ENCODE measurements at regions of chr6 and their contacts with region 1.

Region 1: GRCh38 chr6:157756708-157757429 is 66.2 kb upstream of the SNX9 start:
- DNase-seq: peak; percentile 90
- ATAC-seq: peak; percentile 64
- H3K4me3 ChIP-seq: peak overlapping the region in 1 of 5 experiments; percentile 15
- H3K4me3 Mint-ChIP-seq: peak overlapping the region; percentile 61
- H3K27ac ChIP-seq: no peak overlapping the region
- H3K27ac Mint-ChIP-seq: peak overlapping the region; percentile 41
- H3K4me1 ChIP-seq: peaks cover 28 to 43% of the 10 kb centered on the region in 2 donors
- H3K4me1 Mint-ChIP-seq: peaks cover 58% of the 10 kb centered on the region
- H3K27me3 ChIP-seq: peaks cover 0 to 5% (median 1%) of the 10 kb centered on the region in 4 experiments
- H3K27me3 Mint-ChIP-seq: peaks cover 13% of the 10 kb centered on the region
- CTCF ChIP-seq: peak; percentile 88

Region 2: DNA sequence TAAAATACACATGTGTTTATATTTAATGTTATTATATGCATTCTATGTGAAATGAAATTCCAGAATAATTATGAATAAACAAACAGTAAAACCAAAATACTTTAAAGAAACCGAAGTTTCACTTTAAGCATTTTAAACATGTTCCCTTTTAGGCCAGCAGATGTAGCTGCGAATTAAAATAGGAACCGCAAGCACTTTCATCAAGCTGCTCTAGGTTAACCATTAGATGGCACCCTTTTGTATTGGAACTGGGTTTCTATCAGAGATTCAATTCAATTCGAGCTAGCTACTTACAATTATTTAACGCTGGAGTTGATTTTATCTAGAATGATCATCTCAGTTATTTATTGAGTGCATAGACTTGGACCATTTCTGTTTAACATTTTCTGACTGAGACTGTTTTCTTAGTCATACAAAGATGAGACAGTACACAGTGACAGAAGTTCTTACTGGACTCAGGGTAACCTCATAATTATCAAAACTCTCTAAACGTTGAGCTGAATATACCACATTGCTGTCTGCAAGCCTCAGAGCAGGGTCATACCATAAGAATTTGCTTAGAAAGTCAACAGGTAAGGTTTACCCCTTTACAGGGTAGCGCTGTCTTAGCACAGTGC is 442.1 kb before region 1 on chr6:
- CTCF ChIA-PET with region 1: interaction called, 22 read pairs
- POLR2A ChIA-PET with region 1: no interaction called
- intact Hi-C with region 1: loop called (anchors 1 kb)
- DNase-seq: peak; percentile 77
- ATAC-seq: peak; percentile 92
- H3K4me3 ChIP-seq: no peak overlapping the region
- H3K4me3 Mint-ChIP-seq: no peak overlapping the region
- H3K27ac ChIP-seq: no peak overlapping the region
- H3K27ac Mint-ChIP-seq: no peak overlapping the region
- H3K4me1 ChIP-seq: peaks cover 0 to 3% of the 10 kb centered on the region in 2 donors
- H3K4me1 Mint-ChIP-seq: peaks cover 3% of the 10 kb centered on the region
- H3K27me3 ChIP-seq: no peaks in the 10 kb centered on the region
- H3K27me3 Mint-ChIP-seq: no peaks in the 10 kb centered on the region
- CTCF ChIP-seq: peak; percentile 90

Region 3: DNA sequence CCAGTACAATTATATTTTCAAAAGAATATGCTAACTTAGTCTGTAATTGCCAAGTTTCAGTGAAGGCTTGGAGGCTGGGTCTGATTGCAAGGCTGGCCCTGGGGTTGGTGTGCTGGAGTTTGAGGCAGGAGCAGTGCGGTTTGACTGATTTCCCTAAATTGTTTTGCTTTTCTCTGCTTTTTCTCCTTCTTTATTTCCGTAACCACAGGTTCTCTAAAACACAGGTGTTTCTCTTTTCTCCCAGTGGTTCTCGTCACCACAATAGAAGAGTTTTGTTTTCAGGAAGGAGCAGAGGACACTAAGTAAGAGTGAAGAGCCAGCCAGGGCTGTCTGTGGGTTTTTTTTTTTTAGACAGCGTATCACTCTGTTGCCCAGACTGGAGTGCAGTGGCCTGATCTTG is 58.0 kb after region 1 on chr6:
- CTCF ChIA-PET with region 1: interaction called, 10 read pairs
- POLR2A ChIA-PET with region 1: no interaction called
- intact Hi-C with region 1: no loop called
- DNase-seq: peak; percentile 70
- ATAC-seq: peak; percentile 76
- H3K4me3 ChIP-seq: peak overlapping the region in 1 of 5 experiments; percentile 18
- H3K4me3 Mint-ChIP-seq: peak overlapping the region; percentile 44
- H3K27ac ChIP-seq: peak overlapping the region; percentile 44 to 66
- H3K27ac Mint-ChIP-seq: peak overlapping the region; percentile 86
- H3K4me1 ChIP-seq: peaks cover 23 to 31% of the 10 kb centered on the region in 2 donors
- H3K4me1 Mint-ChIP-seq: peaks cover 45% of the 10 kb centered on the region
- H3K27me3 ChIP-seq: no peaks in the 10 kb centered on the region
- H3K27me3 Mint-ChIP-seq: no peaks in the 10 kb centered on the region
- CTCF ChIP-seq: no peak

Region 4: GRCh38 chr6:157841211-157841840 is 84.5 kb after region 1 on chr6:
- CTCF ChIA-PET with region 1: interaction called, 17 read pairs
- POLR2A ChIA-PET with region 1: no interaction called
- intact Hi-C with region 1: no loop called
- DNase-seq: peak; percentile 63
- ATAC-seq: peak; percentile 95
- H3K4me3 ChIP-seq: no peak overlapping the region
- H3K4me3 Mint-ChIP-seq: peak overlapping the region; percentile 37
- H3K27ac ChIP-seq: no peak overlapping the region
- H3K27ac Mint-ChIP-seq: peak overlapping the region; percentile 26
- H3K4me1 ChIP-seq: peaks cover 46 to 51% of the 10 kb centered on the region in 2 donors
- H3K4me1 Mint-ChIP-seq: peaks cover 75% of the 10 kb centered on the region
- H3K27me3 ChIP-seq: no peaks in the 10 kb centered on the region
- H3K27me3 Mint-ChIP-seq: no peaks in the 10 kb centered on the region
- CTCF ChIP-seq: no peak

Region 5: DNA sequence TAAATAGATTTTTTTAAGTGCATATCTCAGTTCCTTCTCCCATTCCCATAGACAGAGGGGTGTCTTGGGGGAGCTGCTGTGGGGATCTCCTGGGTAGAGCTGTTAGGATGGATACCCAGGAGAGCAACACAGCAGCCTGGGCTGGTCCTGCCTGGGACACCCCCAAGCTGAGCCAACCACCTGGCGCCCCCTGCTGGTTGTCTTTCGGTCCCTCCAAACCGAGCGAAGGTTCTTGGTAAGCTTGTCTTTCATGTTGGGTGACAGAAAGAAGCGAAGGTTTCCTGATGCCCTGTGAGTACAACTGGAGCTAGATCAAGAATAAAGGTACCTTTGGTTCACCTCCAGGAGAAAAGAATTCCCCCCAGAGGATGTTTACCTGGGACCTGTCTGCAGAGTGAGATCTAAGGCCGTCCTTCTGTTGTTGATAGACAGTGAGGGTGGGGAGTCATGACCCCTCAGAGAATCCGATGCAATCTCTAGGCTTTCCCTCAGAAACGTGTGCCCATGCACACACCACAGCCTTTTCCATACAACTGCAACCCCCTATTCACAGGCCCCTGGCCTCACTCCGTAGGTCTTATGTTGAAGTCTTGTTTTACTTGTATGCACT is 117.0 kb after region 1 on chr6:
- CTCF ChIA-PET with region 1: interaction called, 340 read pairs
- POLR2A ChIA-PET with region 1: interaction called, 4 read pairs
- intact Hi-C with region 1: loop called (anchors 1 kb)
- DNase-seq: peak; percentile 85
- ATAC-seq: peak; percentile 86
- H3K4me3 ChIP-seq: no peak overlapping the region
- H3K4me3 Mint-ChIP-seq: no peak overlapping the region
- H3K27ac ChIP-seq: no peak overlapping the region
- H3K27ac Mint-ChIP-seq: no peak overlapping the region
- H3K4me1 ChIP-seq: peaks cover 12 to 16% of the 10 kb centered on the region in 2 donors
- H3K4me1 Mint-ChIP-seq: peaks cover 26% of the 10 kb centered on the region
- H3K27me3 ChIP-seq: no peaks in the 10 kb centered on the region
- H3K27me3 Mint-ChIP-seq: no peaks in the 10 kb centered on the region
- CTCF ChIP-seq: peak; percentile 96

Region 6: GRCh38 chr6:157946865-157947532 is 190.1 kb after region 1 on chr6:
- CTCF ChIA-PET with region 1: interaction called, 19 read pairs
- POLR2A ChIA-PET with region 1: no interaction called
- intact Hi-C with region 1: loop called (anchors 2 kb)
- DNase-seq: peak; percentile 45
- ATAC-seq: peak; percentile 24
- H3K4me3 ChIP-seq: no peak overlapping the region
- H3K4me3 Mint-ChIP-seq: no peak overlapping the region
- H3K27ac ChIP-seq: no peak overlapping the region
- H3K27ac Mint-ChIP-seq: peak overlapping the region; percentile 61
- H3K4me1 ChIP-seq: no peaks in the 10 kb centered on the region
- H3K4me1 Mint-ChIP-seq: no peaks in the 10 kb centered on the region
- H3K27me3 ChIP-seq: no peaks in the 10 kb centered on the region
- H3K27me3 Mint-ChIP-seq: no peaks in the 10 kb centered on the region
- CTCF ChIP-seq: peak; percentile 56

Region 7: GRCh38 chr6:158109744-158110143 is 352.9 kb after region 1 on chr6:
- CTCF ChIA-PET with region 1: no interaction called
- POLR2A ChIA-PET with region 1: no interaction called
- intact Hi-C with region 1: no loop called
- DNase-seq: no peak
- ATAC-seq: no peak
- H3K4me3 ChIP-seq: no peak overlapping the region
- H3K4me3 Mint-ChIP-seq: no peak overlapping the region
- H3K27ac ChIP-seq: no peak overlapping the region
- H3K27ac Mint-ChIP-seq: no peak overlapping the region
- H3K4me1 ChIP-seq: no peaks in the 10 kb centered on the region
- H3K4me1 Mint-ChIP-seq: no peaks in the 10 kb centered on the region
- H3K27me3 ChIP-seq: no peaks in the 10 kb centered on the region
- H3K27me3 Mint-ChIP-seq: no peaks in the 10 kb centered on the region
- CTCF ChIP-seq: no peak